ENCODE measurements at regions of chr11 and their contacts with region 1.

Region 1: GRCh38 chr11:102154806-102155205 is 44.6 kb downstream of the YAP1 start:
- DNase-seq: no peak
- ATAC-seq: no peak
- H3K4me3 Mint-ChIP-seq: no peak overlapping the region
- H3K27ac Mint-ChIP-seq: no peak overlapping the region
- H3K4me1 Mint-ChIP-seq: peaks cover 42% of the 10 kb centered on the region
- H3K27me3 Mint-ChIP-seq: no peaks in the 10 kb centered on the region
- CTCF ChIP-seq: no peak

Region 2: GRCh38 chr11:102085864-102086551 is 68.8 kb before region 1 on chr11:
- CTCF ChIA-PET with region 1: no interaction called
- POLR2A ChIA-PET with region 1: no interaction called
- DNase-seq: no peak
- ATAC-seq: no peak
- H3K4me3 Mint-ChIP-seq: no peak overlapping the region
- H3K27ac Mint-ChIP-seq: no peak overlapping the region
- H3K4me1 Mint-ChIP-seq: no peaks in the 10 kb centered on the region
- H3K27me3 Mint-ChIP-seq: no peaks in the 10 kb centered on the region
- CTCF ChIP-seq: no peak

Region 3: DNA sequence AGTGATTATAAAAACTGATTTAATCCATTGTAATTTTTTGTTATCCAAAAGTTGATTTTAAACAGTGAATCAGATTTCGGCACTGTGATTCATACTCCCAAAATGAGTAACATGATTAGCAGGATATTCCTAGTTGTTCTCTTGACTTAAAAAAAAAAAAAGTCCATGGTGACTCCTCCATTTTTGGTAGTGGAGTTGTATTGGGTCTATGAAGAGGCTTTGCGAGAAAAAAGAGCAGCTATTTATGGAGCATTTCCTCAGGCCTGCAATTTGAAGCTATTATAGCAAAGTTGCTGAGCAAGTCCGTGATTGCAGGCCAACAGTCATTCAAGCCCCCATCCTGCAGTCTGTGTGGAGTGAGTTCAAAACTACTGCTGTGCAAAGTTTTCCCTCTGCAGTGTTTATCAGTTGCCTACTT is 15.7 kb before region 1 on chr11:
- CTCF ChIA-PET with region 1: no interaction called
- POLR2A ChIA-PET with region 1: interaction called, 10 read pairs
- DNase-seq: no peak
- ATAC-seq: peak; percentile 56
- H3K4me3 Mint-ChIP-seq: no peak overlapping the region; the same call in 1 of the 2 replicates
- H3K27ac Mint-ChIP-seq: peak overlapping the region; percentile 45
- H3K4me1 Mint-ChIP-seq: peaks cover 49% of the 10 kb centered on the region
- H3K27me3 Mint-ChIP-seq: no peaks in the 10 kb centered on the region
- CTCF ChIP-seq: no peak

Region 4: DNA sequence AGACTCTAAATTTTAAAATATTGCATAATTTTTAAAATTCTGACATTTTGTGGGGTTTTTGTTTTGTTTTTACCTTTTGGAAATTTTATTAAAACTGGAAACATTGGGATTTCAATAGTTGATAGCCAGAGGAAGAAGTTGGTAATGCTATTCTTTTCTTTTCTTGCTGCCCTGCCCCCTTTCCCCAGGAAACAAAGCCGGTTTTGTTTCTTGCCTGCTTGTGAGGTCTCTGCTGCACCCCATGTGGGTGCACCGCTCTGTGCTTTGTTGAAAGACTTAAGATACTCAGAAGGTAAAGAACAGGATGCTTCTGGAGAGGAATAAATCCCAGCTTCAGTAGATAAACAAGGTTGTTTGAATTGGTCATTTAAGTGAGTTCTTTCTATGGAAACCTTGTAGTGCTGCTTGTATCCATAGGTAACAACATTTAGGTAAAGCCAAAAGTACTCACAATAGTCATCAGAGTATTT is 42.9 kb after region 1 on chr11:
- CTCF ChIA-PET with region 1: no interaction called
- POLR2A ChIA-PET with region 1: no interaction called
- DNase-seq: peak; percentile 67
- ATAC-seq: peak; percentile 99
- H3K4me3 Mint-ChIP-seq: peak overlapping the region; percentile 47
- H3K27ac Mint-ChIP-seq: peak overlapping the region; percentile 99
- H3K4me1 Mint-ChIP-seq: peaks cover 69% of the 10 kb centered on the region
- H3K27me3 Mint-ChIP-seq: no peaks in the 10 kb centered on the region
- CTCF ChIP-seq: no peak

Region 5: GRCh38 chr11:102260241-102260640 is 105.4 kb after region 1 on chr11:
- CTCF ChIA-PET with region 1: no interaction called
- POLR2A ChIA-PET with region 1: no interaction called
- DNase-seq: no peak
- ATAC-seq: peak; percentile 86
- H3K4me3 Mint-ChIP-seq: no peak overlapping the region
- H3K27ac Mint-ChIP-seq: no peak overlapping the region
- H3K4me1 Mint-ChIP-seq: peaks cover 15% of the 10 kb centered on the region
- H3K27me3 Mint-ChIP-seq: no peaks in the 10 kb centered on the region
- CTCF ChIP-seq: no peak

Region 6: GRCh38 chr11:102274628-102275027 is 119.8 kb after region 1 on chr11:
- CTCF ChIA-PET with region 1: no interaction called
- POLR2A ChIA-PET with region 1: no interaction called
- DNase-seq: no peak
- ATAC-seq: peak; percentile 35; the same call in 1 of the 2 replicates
- H3K4me3 Mint-ChIP-seq: no peak overlapping the region
- H3K27ac Mint-ChIP-seq: no peak overlapping the region
- H3K4me1 Mint-ChIP-seq: peaks cover 27% of the 10 kb centered on the region
- H3K27me3 Mint-ChIP-seq: peaks cover 2% of the 10 kb centered on the region; the same call in 1 of the 2 replicates
- CTCF ChIP-seq: no peak

Measured in WTC11 (cell line).